BJ (cell line): ENCODE measurements at regions of chr9 and their contacts with region 1.

Region 1: GRCh38 chr9:137445275-137445807 is 4.2 kb upstream of the ENTPD8 start:
- DNase-seq: peak; percentile 31
- H3K4me3 ChIP-seq: no peak overlapping the region
- H3K27me3 ChIP-seq: no peaks in the 10 kb centered on the region
- CTCF ChIP-seq: peak; percentile 91

Region 2: DNA sequence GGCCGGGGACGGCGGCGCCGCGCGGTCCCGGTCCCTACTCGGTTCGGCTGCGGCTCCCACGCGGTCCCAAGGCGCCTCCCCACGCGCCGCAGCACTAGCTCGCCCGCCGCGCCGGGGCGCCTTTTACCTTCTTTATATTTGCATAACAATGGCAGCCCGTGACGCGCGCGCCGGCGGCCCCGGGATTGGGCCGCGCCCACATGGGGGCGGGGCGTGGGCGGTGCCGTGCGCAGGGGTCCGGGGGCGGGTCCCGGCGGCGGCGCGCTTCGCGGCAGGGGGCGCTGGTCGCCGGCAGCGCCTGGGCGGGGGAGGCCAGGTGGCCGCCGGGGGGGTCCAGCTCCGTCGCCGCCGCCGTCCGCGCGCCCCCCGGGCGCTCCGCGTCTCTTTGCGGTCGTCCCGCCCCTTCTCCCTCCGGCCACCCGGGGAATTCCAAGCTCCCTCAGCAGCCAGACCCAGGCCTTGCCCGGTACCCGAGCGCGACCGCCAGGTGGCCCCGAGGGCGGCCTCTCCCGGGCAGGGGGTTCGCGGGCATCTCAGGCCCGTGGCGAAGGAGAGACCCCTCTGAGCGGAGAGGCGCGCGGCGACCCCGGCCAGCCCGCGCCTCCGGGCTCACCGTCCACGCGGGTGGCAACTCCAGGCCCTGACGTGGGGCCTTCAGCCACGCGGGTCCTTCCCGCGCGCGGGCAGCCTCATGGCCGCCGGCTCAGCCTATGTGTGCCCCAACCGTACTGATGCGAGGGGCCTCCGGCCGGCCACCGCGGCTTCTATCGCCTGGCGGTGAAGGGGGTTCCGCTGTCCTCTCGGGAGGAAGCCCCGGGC is 143.0 kb before region 1 on chr9 and contains the start of gene NRARP:
- CTCF ChIA-PET with region 1: interaction called, 13 read pairs
- POLR2A ChIA-PET with region 1: no interaction called
- DNase-seq: no peak
- H3K4me3 ChIP-seq: peak within 1 kb of the TSS; percentile 40
- H3K27me3 ChIP-seq: peaks cover 18% of the 10 kb centered on the region
- CTCF ChIP-seq: peak; percentile 60
- polyA plus RNA-seq, gene NRARP: 0.17 TPM in 2 replicates

Region 3: DNA sequence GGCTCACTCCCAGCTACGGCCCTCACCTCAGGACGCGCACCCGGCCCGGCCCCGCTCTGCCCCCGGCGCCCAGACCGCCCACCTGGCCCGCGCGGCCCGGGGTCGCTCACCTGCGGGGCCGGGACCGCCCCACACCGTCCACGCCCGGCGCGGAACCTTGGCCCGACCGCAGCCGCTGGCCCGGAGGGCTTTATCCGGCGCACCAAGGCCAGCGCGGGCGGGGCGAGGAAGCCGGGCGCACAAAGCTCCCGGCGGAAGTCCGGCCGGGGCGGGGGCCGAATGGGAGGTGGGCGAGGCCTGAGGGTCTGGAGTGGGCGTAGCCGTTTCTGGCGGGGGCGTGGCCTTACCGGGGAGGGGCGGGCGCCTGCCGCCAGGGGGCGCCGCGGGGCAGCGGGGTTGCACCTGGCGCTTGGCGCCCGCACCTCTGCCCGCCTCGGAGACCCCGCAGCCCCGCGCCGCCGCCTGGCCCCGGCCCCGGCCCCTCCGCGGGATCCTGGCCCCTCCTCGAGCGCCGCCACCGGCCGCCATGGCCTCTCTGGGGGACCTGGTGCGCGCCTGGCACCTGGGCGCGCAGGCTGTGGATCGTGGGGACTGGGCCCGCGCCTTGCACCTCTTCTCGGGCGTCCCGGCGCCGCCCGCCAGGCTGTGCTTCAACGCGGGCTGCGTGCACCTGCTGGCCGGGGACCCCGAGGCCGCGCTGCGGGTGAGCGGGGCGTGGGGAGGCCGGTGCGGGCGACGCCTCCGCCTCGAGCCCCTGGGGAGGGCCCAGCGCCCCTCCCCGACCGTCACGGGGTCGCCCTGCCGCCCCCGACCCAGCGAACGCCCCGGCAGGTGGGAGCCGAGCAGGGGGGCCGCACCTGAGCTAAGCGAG is 22.1 kb before region 1 on chr9 and contains the starts of genes EXD3 and NOXA1:
- CTCF ChIA-PET with region 1: interaction called, 27 read pairs
- POLR2A ChIA-PET with region 1: no interaction called
- DNase-seq: peak; percentile 19
- H3K4me3 ChIP-seq: peak within 1 kb of the TSS; percentile 73
- H3K27me3 ChIP-seq: no peaks in the 10 kb centered on the region
- CTCF ChIP-seq: peak; percentile 48
- polyA plus RNA-seq, gene EXD3: 4.9 and 5.4 TPM in 2 replicates
- polyA plus RNA-seq, gene NOXA1: 0.20 and 0.32 TPM in 2 replicates

Region 4: DNA sequence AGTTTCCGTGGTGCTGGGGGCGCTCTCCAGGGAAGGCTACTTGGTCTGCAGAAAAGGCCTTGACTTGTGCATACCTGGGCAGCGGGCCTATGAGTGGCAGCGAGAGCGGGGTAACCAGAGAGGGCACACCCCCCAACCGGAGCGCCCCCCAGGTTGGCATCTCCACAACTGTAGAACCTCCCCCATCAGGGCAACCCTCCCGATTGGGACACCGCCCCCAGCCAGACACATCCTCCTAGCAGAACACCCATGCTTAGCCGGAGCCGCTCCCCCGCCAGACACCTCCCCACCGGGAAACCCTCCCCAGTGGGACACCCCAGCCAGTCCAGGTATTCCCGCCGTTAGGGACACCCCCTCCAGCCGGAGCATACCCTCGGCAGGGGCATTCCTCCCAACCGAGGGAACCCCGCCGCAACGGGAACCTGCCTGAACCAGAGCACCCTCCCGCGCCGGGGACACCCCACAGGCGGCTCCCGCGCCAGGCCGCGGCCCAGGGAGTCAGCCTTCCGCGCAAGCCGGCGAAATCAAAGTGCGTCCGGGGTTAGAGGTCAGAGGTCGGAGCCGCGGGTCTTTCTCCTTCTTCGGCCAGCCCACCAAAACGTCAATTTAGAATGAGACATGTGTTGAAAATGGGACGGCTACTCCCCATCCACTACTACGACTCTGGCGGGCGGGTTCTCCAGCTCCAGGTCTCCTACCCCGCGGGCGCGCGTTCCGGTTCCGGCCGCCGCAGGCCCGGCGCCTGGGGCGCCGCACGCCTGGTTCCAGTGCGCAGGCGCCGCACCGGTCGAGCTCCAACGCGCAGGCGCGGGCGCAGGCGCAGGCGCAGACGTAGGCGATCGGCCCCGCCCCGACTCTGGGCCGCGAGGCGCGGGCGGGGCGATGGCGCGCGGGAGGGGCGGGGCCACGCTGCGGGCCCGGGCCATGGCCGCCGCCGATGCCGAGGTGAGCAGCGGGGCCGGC is 173.0 kb after region 1 on chr9 and contains the start of gene EHMT1:
- CTCF ChIA-PET with region 1: no interaction called
- POLR2A ChIA-PET with region 1: no interaction called
- DNase-seq: no peak
- H3K4me3 ChIP-seq: peak within 1 kb of the TSS; percentile 99
- H3K27me3 ChIP-seq: no peaks in the 10 kb centered on the region
- CTCF ChIP-seq: no peak
- polyA plus RNA-seq, gene EHMT1: 18.1 and 23.3 TPM in 2 replicates